HEK293 (cell line): ENCODE measurements at regions of chr10 and their contacts with region 1.

Region 1: DNA sequence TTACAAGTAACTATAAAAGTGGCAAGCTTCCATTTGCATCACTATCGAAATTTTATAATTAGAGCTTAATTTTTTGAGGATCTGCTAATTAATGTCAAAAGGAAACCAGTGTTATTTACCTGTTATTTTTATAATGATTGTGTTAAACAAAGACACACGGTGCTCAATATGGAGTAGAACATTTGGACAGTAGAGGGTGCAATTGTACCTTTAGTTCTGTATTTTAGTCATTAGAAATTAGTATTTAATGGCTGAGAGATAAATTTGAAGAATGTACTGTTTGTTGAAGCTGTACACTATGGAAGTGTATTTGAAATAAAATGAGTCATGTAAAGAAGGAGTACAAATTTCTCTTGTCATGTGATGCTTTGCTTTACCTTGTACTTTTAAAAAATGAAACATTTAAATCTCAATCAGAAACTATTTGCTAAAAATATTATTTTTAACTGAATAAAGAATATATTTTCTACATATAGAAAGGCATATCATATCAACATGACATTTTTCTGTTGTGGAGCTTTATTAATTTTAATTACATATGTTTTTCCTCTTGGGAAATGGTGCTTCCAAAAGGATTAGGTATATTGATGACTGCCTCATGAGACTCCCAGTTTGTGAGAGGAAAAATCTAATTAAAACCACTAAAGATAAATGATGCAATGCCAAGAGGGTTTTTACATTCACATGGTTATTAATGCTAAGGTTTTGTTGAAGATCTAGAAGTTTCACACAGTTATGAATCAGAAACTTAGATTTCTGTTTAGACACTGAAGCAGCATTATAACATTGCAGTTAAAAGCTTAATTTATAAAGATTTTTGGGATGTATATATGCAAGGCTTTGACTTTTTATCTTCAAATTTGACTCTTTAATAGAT is 10.4 kb upstream of the PRKG1 start:
- H3K4me3 ChIP-seq: no peak overlapping the region
- H3K27ac ChIP-seq: no peak overlapping the region
- H3K4me1 ChIP-seq: 0 out of 2 replicates have a peak, but pooled peaks cover 4% of the 10 kb centered on the region
- CTCF ChIP-seq: peak; percentile 34; the same call in 1 of the 2 replicates

Region 2: GRCh38 chr10:50896721-50897120 is 167.2 kb before region 1 on chr10:
- CTCF ChIA-PET with region 1: no interaction called
- POLR2A ChIA-PET with region 1: no interaction called
- H3K4me3 ChIP-seq: no peak overlapping the region
- H3K27ac ChIP-seq: no peak overlapping the region
- H3K4me1 ChIP-seq: no peaks in the 10 kb centered on the region
- CTCF ChIP-seq: no peak

Region 3: GRCh38 chr10:51007781-51008180 is 56.1 kb before region 1 on chr10:
- CTCF ChIA-PET with region 1: interaction called, 14 read pairs
- POLR2A ChIA-PET with region 1: no interaction called
- H3K4me3 ChIP-seq: no peak overlapping the region
- H3K27ac ChIP-seq: no peak overlapping the region
- H3K4me1 ChIP-seq: no peaks in the 10 kb centered on the region
- CTCF ChIP-seq: no peak

Region 4: DNA sequence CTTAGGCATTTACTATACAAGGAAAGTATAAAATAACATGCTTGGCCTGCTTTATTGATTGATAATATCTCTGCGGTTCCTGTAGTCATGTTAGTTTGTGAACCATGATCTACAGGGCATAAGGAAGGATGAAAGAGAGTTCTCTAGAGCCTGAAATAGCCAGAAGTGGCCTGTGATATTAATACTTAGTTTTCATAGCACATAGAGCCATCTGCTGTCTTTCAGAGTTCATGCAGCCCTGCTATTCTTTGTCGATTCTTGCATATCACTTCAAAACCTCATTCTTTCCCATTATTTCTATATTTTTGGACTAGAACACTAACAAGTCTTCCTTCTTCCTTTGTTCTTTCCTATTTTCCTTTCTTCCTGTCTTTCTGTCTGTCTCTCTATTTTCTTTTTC is 16.0 kb before region 1 on chr10:
- CTCF ChIA-PET with region 1: interaction called, 24 read pairs
- POLR2A ChIA-PET with region 1: no interaction called
- H3K4me3 ChIP-seq: no peak overlapping the region
- H3K27ac ChIP-seq: no peak overlapping the region
- H3K4me1 ChIP-seq: no peaks in the 10 kb centered on the region
- CTCF ChIP-seq: no peak

Region 5: GRCh38 chr10:51074238-51075028 is 10.5 kb after region 1 on chr10 and contains the start of gene PRKG1:
- CTCF ChIA-PET with region 1: interaction called, 13 read pairs
- POLR2A ChIA-PET with region 1: interaction called, 3 read pairs
- H3K4me3 ChIP-seq: peak within 1 kb of the TSS; percentile 64
- H3K27ac ChIP-seq: peak within 1 kb of the TSS; percentile 79
- H3K4me1 ChIP-seq: peaks cover 18% of the 10 kb centered on the region
- CTCF ChIP-seq: peak; percentile 33; the same call in 1 of the 2 replicates

Region 6: GRCh38 chr10:51300617-51301304 is 236.9 kb after region 1 on chr10:
- CTCF ChIA-PET with region 1: no interaction called
- POLR2A ChIA-PET with region 1: no interaction called
- H3K4me3 ChIP-seq: no peak overlapping the region
- H3K27ac ChIP-seq: no peak overlapping the region
- H3K4me1 ChIP-seq: no peaks in the 10 kb centered on the region
- CTCF ChIP-seq: no peak

Region 7: DNA sequence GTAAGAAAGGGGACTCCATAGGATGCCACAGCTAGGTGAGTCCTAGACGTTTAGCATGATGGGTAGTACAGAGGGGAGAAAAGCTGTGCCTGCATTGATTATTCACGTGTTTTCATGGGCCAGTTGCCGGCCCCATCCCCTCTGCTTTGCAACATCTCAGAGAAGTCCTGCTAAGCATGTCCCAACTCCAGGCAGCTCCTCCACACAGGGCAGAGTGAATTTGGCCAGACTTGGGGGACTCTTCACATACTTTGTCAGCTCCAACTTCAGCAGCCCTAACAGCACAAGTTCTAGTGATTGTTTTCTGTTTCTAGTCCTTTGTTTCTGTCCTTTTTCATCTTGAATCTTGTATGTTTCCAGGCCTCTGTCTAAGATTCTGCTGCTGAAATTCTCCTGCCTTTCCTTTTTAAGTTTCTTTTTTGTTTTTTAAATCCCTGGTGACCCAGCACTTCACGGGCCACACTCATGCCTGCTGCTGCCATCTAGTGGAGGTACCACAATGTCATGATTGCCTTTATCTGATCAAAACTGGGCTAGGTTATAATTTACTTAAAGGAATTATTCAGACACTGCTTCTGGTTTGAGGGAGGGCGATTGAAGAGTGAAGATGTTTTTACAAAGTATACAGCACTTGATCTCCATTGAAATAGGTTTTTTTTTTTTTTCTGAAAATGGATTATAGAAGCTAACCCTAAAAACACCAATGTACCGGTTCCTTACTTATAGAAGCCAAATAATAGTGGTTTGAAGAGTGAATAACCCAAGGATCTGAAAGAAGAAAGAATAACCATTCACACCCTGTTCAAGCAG is 358.6 kb after region 1 on chr10:
- CTCF ChIA-PET with region 1: interaction called, 45 read pairs
- POLR2A ChIA-PET with region 1: no interaction called
- H3K4me3 ChIP-seq: no peak overlapping the region
- H3K27ac ChIP-seq: no peak overlapping the region
- H3K4me1 ChIP-seq: no peaks in the 10 kb centered on the region
- CTCF ChIP-seq: peak; percentile 59

Region 8: DNA sequence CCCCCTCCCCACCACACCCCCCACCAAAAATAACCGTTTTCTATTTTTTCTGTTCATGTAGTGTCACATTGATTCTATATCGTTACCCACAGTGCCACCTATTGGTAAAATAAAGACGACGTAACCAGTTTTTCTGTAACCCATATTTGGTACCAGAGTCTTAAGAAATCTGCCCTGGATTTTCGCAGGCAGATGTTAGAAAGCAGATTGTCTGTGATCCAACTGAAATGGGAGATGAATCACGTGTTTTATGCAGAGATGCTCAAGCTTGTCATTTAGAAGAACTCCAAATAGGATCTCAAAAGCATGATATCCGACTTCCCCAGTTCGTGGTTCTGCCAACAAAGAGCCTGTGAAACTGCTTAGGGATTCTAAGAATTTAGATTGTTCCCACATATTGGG is 896.6 kb after region 1 on chr10:
- CTCF ChIA-PET with region 1: interaction called, 13 read pairs
- POLR2A ChIA-PET with region 1: no interaction called
- H3K4me3 ChIP-seq: no peak overlapping the region
- H3K27ac ChIP-seq: no peak overlapping the region
- H3K4me1 ChIP-seq: no peaks in the 10 kb centered on the region
- CTCF ChIP-seq: peak; percentile 26; the same call in 1 of the 2 replicates